Activated CD4-positive, alpha-beta T cell treated with anti-CD3 and anti-CD28 coated beads, Interleukin-2, amount 10 ng/mL, durations not matched to agents 7 days and 5 days (primary cell): ENCODE measurements at regions of chr7 and their contacts with region 1.

Region 1: DNA sequence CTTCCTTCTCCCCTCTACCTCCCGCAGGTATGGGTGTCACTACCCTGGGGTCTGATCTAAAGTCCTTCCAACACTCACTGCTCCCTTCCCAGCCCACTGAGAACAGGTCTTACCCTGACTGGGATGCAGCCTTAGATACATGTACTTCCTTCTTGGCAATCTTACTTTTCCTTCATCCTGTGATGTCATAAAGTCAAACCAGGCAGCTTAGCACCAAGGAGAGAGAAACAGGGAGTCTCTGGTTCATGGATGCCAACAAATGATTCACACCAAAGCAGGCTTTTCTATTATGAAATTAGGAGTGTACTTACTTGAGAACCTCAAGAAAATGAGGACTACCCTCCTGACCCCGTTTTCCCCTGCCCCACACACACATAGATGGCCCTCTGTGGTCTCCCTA is 111.0 kb upstream of the KMT2E start:
- DNase-seq: no peak
- H3K4me3 Mint-ChIP-seq: no peak overlapping the region
- H3K27ac Mint-ChIP-seq: no peak overlapping the region
- H3K4me1 Mint-ChIP-seq: no peaks in the 10 kb centered on the region
- H3K27me3 Mint-ChIP-seq: peaks cover 16% of the 10 kb centered on the region

Region 2: DNA sequence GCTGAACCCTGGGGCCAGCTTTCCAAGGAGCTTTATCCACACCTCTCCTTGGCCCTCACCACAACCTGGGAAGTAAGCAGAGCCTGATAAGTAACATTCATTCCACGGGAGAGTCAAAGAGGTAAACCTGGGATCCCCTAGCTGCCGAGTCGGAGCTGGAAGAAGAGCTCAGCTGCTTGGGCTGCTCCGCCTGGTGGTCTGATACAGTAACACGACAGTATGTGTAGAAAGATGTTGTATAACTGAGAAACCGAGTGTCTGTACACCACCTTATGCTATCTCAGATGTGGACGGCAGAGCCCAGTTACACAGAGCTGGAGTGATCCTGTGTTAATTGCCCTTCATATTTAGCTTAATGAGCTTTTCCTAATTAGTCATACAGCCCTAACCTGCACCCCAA is 40.3 kb before region 1 on chr7:
- CTCF ChIA-PET with region 1: no interaction called
- POLR2A ChIA-PET with region 1: no interaction called
- DNase-seq: no peak
- H3K4me3 Mint-ChIP-seq: no peak overlapping the region
- H3K27ac Mint-ChIP-seq: no peak overlapping the region
- H3K4me1 Mint-ChIP-seq: peaks cover 10% of the 10 kb centered on the region
- H3K27me3 Mint-ChIP-seq: peaks cover 18% of the 10 kb centered on the region

Region 3: GRCh38 chr7:104883718-104884452 is 19.2 kb before region 1 on chr7:
- CTCF ChIA-PET with region 1: interaction called, 12 read pairs
- POLR2A ChIA-PET with region 1: no interaction called
- DNase-seq: peak; percentile 70
- H3K4me3 Mint-ChIP-seq: no peak overlapping the region
- H3K27ac Mint-ChIP-seq: peak overlapping the region; percentile 22
- H3K4me1 Mint-ChIP-seq: peaks cover 17% of the 10 kb centered on the region
- H3K27me3 Mint-ChIP-seq: peaks cover 4% of the 10 kb centered on the region